ENCODE measurements at regions of chr1 and their contacts with region 1.

Region 1: GRCh38 chr1:203682473-203683383 is 56.1 kb downstream of the ATP2B4 start:
- DNase-seq: peak; percentile 38 to 86 (median 71)
- H3K4me3 ChIP-seq: peak overlapping the region; percentile 12
- H3K4me3 Mint-ChIP-seq: peak overlapping the region; percentile 32 to 75 (median 60)
- H3K27ac ChIP-seq: peak overlapping the region; percentile 82
- H3K27ac Mint-ChIP-seq: peak overlapping the region; percentile 94 to 100 (median 96)
- H3K4me1 ChIP-seq: peaks cover 39% of the 10 kb centered on the region
- H3K4me1 Mint-ChIP-seq: peaks cover 56 to 75% (median 66%) of the 10 kb centered on the region in 3 donors
- H3K27me3 ChIP-seq: no peaks in the 10 kb centered on the region
- H3K27me3 Mint-ChIP-seq: no peaks in the 10 kb centered on the region

Region 2: DNA sequence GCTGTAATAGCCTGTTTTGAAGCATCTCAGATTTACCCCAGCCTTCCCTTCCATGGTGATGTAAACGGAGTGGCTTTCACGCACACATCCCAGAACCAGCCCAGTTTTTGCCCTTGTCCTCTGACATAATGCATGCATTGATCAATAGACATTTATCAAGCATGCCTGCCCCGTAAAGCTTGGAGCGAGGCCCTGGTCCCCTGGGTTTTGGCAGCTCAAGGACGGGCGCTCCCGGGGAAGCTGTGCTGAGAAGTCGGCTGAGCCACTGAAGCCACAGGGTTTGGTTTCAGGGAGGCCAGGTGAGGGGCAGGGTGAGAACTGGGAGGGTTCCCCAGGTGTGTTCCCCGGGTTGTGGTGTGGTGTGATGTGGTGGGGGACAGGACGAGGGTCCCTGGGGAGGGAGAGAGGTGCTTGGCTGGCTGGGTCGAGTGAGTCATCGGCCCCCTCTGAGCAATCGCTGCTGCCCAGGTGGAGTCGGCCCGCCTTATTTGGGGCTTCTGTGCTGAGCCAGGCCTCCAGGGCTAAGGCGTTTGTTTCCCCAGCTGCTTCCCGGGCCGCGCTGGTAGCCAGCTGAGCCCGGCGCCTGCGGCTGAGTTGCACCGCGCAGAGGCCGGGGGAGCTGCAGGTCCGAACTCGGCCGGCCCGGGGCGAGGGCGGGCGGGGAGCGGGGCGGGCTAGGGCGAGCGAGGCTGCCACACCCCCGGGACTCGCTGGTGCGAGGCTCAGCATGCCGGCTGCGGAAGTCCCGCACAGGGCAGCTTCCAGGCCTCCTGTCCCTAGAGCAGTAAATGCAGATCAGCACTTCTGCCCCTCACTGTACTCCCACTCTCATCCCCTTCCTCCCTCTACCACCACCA is 32.5 kb before region 1 on chr1:
- CTCF ChIA-PET with region 1: interaction called, 4 read pairs
- POLR2A ChIA-PET with region 1: interaction called, 11 read pairs
- DNase-seq: peak; percentile 41 to 89 (median 71)
- H3K4me3 ChIP-seq: peak overlapping the region; percentile 32
- H3K4me3 Mint-ChIP-seq: peak overlapping the region; percentile 68 to 93 (median 85)
- H3K27ac ChIP-seq: peak overlapping the region; percentile 57
- H3K27ac Mint-ChIP-seq: peak overlapping the region; percentile 93 to 100 (median 97)
- H3K4me1 ChIP-seq: peaks cover 66% of the 10 kb centered on the region
- H3K4me1 Mint-ChIP-seq: peaks cover 73 to 87% (median 82%) of the 10 kb centered on the region in 3 donors
- H3K27me3 ChIP-seq: no peaks in the 10 kb centered on the region
- H3K27me3 Mint-ChIP-seq: no peaks in the 10 kb centered on the region

Measured in CD8-positive, alpha-beta memory T cell (primary cell).